GM18951 (cell line): ENCODE measurements at regions of chr11 and their contacts with region 1.

Region 1: GRCh38 chr11:131064373-131064991 is 148.2 kb upstream of the SNX19 start:
- POLR2A ChIP-seq: no peak

Region 2: DNA sequence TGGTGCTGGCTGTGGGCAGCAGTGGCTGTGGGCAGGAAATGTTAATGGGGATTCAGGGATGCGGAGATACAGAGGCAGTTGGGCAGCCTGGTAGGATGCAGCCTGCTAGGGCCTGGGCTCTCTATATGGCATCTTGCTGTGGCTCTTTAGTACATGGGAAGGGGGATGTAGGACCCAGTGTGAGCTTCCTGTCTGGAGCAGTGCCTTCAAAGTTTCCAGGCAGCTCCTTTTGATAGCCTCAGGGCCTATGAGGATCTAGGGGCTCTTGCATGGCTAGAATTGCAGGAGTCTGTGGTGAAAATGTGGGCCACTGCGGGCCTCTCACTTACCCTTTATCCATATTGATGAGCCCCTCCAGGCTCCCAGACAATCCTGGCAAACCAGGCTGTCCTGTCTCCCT is 65.0 kb after region 1 on chr11:
- in situ Hi-C with region 1: no loop called
- POLR2A ChIP-seq: no peak

Region 3: GRCh38 chr11:131511794-131512193 is 447.3 kb after region 1 on chr11:
- in situ Hi-C with region 1: loop called (anchors 25 kb)
- POLR2A ChIP-seq: no peak

Region 4: GRCh38 chr11:131637469-131638175 is 573.1 kb after region 1 on chr11:
- in situ Hi-C with region 1: no loop called
- POLR2A ChIP-seq: no peak

Region 5: GRCh38 chr11:131674051-131674755 is 609.7 kb after region 1 on chr11:
- in situ Hi-C with region 1: loop called (anchors 25 kb)
- POLR2A ChIP-seq: no peak